Esophagus muscularis mucosa (tissue), 4 donors: ENCODE measurements at regions of chr1 and their contacts with region 1.

Region 1: GRCh38 chr1:201686714-201687455 is 142.1 kb upstream of the IPO9 start:
- DNase-seq: no peak
- H3K4me3 ChIP-seq: no peak overlapping the region
- H3K27ac ChIP-seq: no peak overlapping the region
- H3K4me1 ChIP-seq: peaks cover 0 to 8% (median 1%) of the 10 kb centered on the region in 4 donors
- H3K27me3 ChIP-seq: no peaks in the 10 kb centered on the region
- CTCF ChIP-seq: no peak
- EP300 ChIP-seq: no peak
- POLR2A ChIP-seq: no peak

Region 2: GRCh38 chr1:201570886-201571624 is 115.8 kb before region 1 on chr1:
- intact Hi-C with region 1: loop called (anchors 5 kb)
- DNase-seq: no peak
- H3K4me3 ChIP-seq: no peak overlapping the region
- H3K27ac ChIP-seq: peak overlapping the region in 1 of 4 donors; percentile 13
- H3K4me1 ChIP-seq: peaks cover 28 to 54% (median 48%) of the 10 kb centered on the region in 4 donors
- H3K27me3 ChIP-seq: no peaks in the 10 kb centered on the region
- CTCF ChIP-seq: no peak
- EP300 ChIP-seq: no peak
- POLR2A ChIP-seq: no peak

Region 3: GRCh38 chr1:201593200-201593921 is 93.5 kb before region 1 on chr1:
- intact Hi-C with region 1: no loop called
- DNase-seq: peak; percentile 94
- H3K4me3 ChIP-seq: no peak overlapping the region
- H3K27ac ChIP-seq: peak overlapping the region; percentile 46 to 69 (median 54)
- H3K4me1 ChIP-seq: peaks cover 23 to 50% (median 40%) of the 10 kb centered on the region in 4 donors
- H3K27me3 ChIP-seq: no peaks in the 10 kb centered on the region
- CTCF ChIP-seq: no peak
- EP300 ChIP-seq: peak; percentile 40
- POLR2A ChIP-seq: no peak

Region 4: GRCh38 chr1:201792534-201793305 is 105.8 kb after region 1 on chr1:
- intact Hi-C with region 1: no loop called
- DNase-seq: peak; percentile 96
- H3K4me3 ChIP-seq: no peak overlapping the region
- H3K27ac ChIP-seq: peak overlapping the region; percentile 52 to 75 (median 69)
- H3K4me1 ChIP-seq: peaks cover 44 to 47% (median 45%) of the 10 kb centered on the region in 4 donors
- H3K27me3 ChIP-seq: no peaks in the 10 kb centered on the region
- CTCF ChIP-seq: peak; percentile 96 to 98 (median 97)
- EP300 ChIP-seq: no peak
- POLR2A ChIP-seq: no peak